ENCODE measurements at regions of chr10 and their contacts with region 1.

Region 1: DNA sequence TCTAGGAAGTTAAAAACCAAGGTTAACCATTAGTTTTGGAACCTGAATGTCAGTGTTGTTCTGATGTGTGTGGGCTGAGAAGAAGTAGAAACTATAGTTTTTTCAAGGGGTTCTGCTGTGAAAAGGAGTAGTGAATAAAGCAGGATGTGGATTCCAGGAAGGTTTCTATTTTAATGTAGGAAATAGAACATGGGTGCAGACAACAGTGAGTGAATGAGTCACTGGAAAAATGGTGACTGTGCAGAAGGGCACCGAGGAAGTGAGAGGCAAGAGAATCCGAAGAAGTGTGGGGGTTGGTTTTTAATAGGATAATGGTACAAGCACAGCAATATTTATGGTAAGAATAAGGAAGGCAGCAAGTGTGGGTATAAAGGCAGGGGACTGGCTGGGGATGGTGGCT is 120.4 kb downstream of the ARHGAP21 start:
- DNase-seq: peak; percentile 70
- ATAC-seq: peak; percentile 85
- H3K4me3 ChIP-seq: no peak overlapping the region
- H3K27ac ChIP-seq: no peak overlapping the region
- H3K4me1 ChIP-seq: peaks cover 4% of the 10 kb centered on the region; the same call in 1 of the 2 replicates
- H3K27me3 ChIP-seq: no peaks in the 10 kb centered on the region
- CTCF ChIP-seq: no peak
- POLR2A ChIP-seq: no peak
- RAD21 ChIP-seq: no peak

Region 2: DNA sequence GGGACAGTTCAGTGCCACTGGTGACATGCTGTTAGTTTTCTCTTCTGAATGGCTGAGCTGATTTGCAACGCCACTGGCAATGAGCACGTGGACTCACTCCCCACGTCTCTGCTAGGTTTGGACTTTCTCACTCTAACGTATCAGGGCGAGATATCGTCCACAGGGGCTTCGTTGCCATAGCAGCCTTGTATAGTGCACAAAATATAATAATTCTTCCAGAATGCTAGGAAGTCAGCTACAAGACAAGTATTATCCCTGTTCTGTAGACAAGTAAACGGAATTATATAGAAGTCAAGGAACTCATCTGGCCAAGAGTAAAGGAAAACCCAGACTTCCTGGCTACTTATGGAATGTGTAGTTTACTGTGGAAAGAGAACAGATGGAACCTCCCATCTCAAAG is 106.4 kb before region 1 on chr10:
- CTCF ChIA-PET with region 1: no interaction called
- POLR2A ChIA-PET with region 1: no interaction called
- dilution Hi-C with region 1: no loop called
- in situ Hi-C with region 1: no loop called
- intact Hi-C with region 1: no loop called
- DNase-seq: no peak
- ATAC-seq: no peak
- H3K4me3 ChIP-seq: no peak overlapping the region
- H3K27ac ChIP-seq: no peak overlapping the region
- H3K4me1 ChIP-seq: peaks cover 2% of the 10 kb centered on the region; the same call in 1 of the 2 replicates
- H3K27me3 ChIP-seq: no peaks in the 10 kb centered on the region
- CTCF ChIP-seq: no peak
- POLR2A ChIP-seq: no peak
- RAD21 ChIP-seq: no peak

Region 3: DNA sequence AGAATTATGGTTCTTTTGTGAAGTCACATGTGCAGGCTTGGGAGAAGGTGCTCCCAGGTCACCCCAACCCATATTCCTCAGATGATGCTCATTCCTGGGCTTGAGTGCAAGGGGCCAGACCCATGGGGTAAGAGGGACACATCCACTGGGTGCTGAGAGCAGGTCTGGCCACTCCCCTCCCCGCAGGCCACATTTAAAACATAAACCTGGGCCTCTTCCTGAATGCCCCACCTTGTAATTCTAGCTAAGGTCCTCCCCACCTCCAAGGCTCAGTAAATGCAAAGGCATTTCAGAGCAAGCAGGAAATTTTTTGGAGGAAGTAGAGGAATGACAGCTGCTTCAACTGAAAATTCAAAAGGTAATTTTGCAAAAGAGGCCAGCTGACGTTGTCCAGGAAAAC is 52.2 kb before region 1 on chr10:
- CTCF ChIA-PET with region 1: no interaction called
- POLR2A ChIA-PET with region 1: no interaction called
- dilution Hi-C with region 1: no loop called
- in situ Hi-C with region 1: no loop called
- intact Hi-C with region 1: no loop called
- DNase-seq: no peak
- ATAC-seq: no peak
- H3K4me3 ChIP-seq: no peak overlapping the region
- H3K27ac ChIP-seq: no peak overlapping the region
- H3K4me1 ChIP-seq: no peaks in the 10 kb centered on the region
- H3K27me3 ChIP-seq: peaks cover 3% of the 10 kb centered on the region; the same call in 1 of the 2 replicates
- CTCF ChIP-seq: no peak
- POLR2A ChIP-seq: no peak
- RAD21 ChIP-seq: no peak

Region 4: GRCh38 chr10:24617771-24618391 is 14.5 kb after region 1 on chr10:
- CTCF ChIA-PET with region 1: interaction called, 17 read pairs
- POLR2A ChIA-PET with region 1: no interaction called
- dilution Hi-C with region 1: no loop called
- in situ Hi-C with region 1: no loop called
- intact Hi-C with region 1: no loop called
- DNase-seq: peak; percentile 31
- ATAC-seq: no peak; the same call in 1 of the 2 replicates
- H3K4me3 ChIP-seq: no peak overlapping the region
- H3K27ac ChIP-seq: no peak overlapping the region
- H3K4me1 ChIP-seq: peaks cover 4% of the 10 kb centered on the region; the same call in 1 of the 2 replicates
- H3K27me3 ChIP-seq: no peaks in the 10 kb centered on the region
- CTCF ChIP-seq: peak; percentile 70
- POLR2A ChIP-seq: no peak
- RAD21 ChIP-seq: peak; percentile 60

Measured in IMR-90 (cell line).